Sigmoid colon (tissue), 7 donors: ENCODE measurements at regions of chr3 and their contacts with region 1.

Region 1: DNA sequence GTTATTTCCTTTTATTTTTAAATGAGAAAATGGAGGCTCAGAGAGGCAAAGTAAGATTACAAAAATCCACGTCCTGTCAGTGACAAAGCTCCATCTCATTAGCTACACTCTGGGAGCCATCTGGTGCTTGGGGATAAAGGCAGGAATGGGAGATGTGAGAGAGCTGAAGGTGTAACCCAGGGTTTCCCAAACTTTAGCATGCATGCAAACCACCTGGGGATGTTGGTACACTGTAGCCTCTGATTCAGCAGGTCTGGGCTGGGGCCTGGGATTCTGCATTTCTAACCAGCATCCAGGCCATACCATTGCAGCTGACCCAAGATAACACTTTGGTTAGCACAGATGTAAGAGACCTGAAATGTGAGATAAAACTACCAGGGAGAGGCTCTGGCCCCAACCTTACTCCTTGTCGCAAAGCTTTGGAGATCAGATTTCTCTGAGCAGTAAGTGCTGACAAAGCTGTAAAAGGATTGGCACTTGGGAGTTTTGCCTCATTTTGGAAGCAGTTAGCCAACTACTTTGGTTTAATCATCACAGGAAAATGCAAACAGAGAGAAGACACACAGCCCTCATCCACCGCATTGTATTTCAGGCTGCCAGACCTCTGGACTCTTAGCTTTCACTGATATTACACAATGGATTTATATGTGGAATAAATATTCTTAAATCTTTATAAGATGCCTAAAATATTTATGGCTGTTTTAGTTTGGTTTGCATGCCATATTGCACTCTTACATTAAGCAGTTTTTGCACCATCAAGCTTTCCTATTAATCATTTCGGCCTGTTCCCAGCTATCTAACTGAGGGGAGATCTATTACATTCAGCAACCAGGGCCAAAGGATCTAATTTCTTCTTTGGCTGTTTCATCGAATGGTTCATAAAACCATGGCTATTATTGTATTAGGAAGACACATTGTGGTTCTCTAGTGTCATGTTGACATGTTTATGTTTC is 263.0 kb downstream of the EBLN2 start:
- DNase-seq: no peak
- H3K4me3 ChIP-seq: no peak overlapping the region
- H3K27ac ChIP-seq: peak overlapping the region in 3 of 4 donors; percentile 20 to 61 (median 52)
- H3K4me1 ChIP-seq: peaks cover 0 to 19% (median 14%) of the 10 kb centered on the region in 4 donors
- H3K27me3 ChIP-seq: no peaks in the 10 kb centered on the region
- CTCF ChIP-seq: no peak
- EP300 ChIP-seq: no peak
- POLR2A ChIP-seq: no peak

Region 2: GRCh38 chr3:71926262-71926600 is 1398.2 kb before region 1 on chr3:
- intact Hi-C with region 1: no loop called
- DNase-seq: no peak
- H3K4me3 ChIP-seq: no peak overlapping the region
- H3K27ac ChIP-seq: no peak overlapping the region
- H3K4me1 ChIP-seq: no peaks in the 10 kb centered on the region
- H3K27me3 ChIP-seq: no peaks in the 10 kb centered on the region
- CTCF ChIP-seq: peak in 1 of 4 experiments; percentile 31
- EP300 ChIP-seq: no peak
- POLR2A ChIP-seq: no peak

Region 3: GRCh38 chr3:73255609-73256029 is 68.9 kb before region 1 on chr3:
- intact Hi-C with region 1: no loop called
- DNase-seq: no peak
- H3K4me3 ChIP-seq: no peak overlapping the region
- H3K27ac ChIP-seq: no peak overlapping the region
- H3K4me1 ChIP-seq: peaks cover 0 to 7% (median 0%) of the 10 kb centered on the region in 4 donors
- H3K27me3 ChIP-seq: no peaks in the 10 kb centered on the region
- CTCF ChIP-seq: no peak
- EP300 ChIP-seq: no peak
- POLR2A ChIP-seq: no peak

Region 4: GRCh38 chr3:73365756-73366397 is 41.4 kb after region 1 on chr3:
- intact Hi-C with region 1: loop called (anchors 5 kb)
- DNase-seq: peak; percentile 94
- H3K4me3 ChIP-seq: peak overlapping the region in 1 of 4 donors; percentile 9
- H3K27ac ChIP-seq: peak overlapping the region; percentile 1 to 81 (median 68)
- H3K4me1 ChIP-seq: peaks cover 0 to 35% (median 21%) of the 10 kb centered on the region in 4 donors
- H3K27me3 ChIP-seq: no peaks in the 10 kb centered on the region
- CTCF ChIP-seq: no peak
- EP300 ChIP-seq: peak; percentile 35 to 73 (median 62)
- POLR2A ChIP-seq: no peak

Region 5: GRCh38 chr3:73409118-73409763 is 84.8 kb after region 1 on chr3:
- intact Hi-C with region 1: loop called (anchors 10 kb)
- DNase-seq: no peak
- H3K4me3 ChIP-seq: no peak overlapping the region
- H3K27ac ChIP-seq: peak overlapping the region; percentile 19 to 71 (median 32)
- H3K4me1 ChIP-seq: peaks cover 0 to 100% (median 83%) of the 10 kb centered on the region in 4 donors
- H3K27me3 ChIP-seq: no peaks in the 10 kb centered on the region
- CTCF ChIP-seq: no peak
- EP300 ChIP-seq: no peak
- POLR2A ChIP-seq: no peak